ENCODE measurements at regions of chr2 and their contacts with region 1.

Region 1: DNA sequence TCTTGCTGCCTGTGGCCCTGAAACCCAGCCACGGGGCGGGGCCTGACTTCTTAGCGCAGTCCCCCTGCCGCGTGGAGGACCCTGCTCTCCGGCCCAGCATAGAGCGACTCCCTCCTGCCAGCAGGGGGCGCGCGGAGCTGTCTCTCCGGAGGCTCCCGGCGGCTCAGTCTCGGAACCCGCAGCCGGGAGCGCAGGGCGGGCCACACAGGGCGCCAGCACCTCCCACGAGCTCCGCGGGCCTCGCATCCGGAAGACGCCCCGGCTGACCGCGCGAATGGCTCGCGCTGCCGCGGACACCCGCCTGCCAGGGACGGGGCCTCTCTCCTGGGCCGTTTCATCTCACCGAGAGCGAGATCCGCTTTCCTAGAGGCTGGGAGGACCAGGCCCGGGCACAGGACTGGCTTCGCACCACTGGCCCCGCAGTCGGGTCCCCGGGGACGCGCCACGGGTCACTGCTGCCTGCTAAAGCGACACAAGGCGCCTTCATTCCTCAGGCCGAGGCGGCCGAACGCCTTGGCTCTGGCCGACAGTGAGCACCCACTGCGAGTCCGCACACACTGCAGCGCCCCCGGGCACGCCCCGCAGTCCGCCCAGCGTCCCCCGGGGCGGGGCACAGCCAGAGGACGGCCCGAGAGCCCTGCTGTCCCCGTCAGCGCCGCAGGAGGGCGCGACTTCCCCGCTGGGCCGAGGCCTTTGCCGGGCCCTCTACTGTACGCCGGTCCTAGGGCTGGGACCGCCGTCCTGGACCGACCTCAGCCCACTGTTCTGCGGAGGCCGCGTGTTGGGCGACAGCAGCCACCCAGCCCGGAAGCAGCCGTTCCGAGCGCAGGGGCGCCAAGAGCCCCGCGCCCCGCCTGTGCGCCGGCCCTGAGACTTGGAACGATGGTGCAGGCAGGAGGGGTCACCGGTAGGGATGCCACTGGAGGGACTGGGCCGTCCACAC is 39.0 kb upstream of the ARHGEF4 start:
- DNase-seq: peak; percentile 94
- ATAC-seq: peak; percentile 96
- H3K4me3 Mint-ChIP-seq: peak overlapping the region; percentile 63
- H3K27ac Mint-ChIP-seq: peak overlapping the region; percentile 42
- H3K4me1 Mint-ChIP-seq: peaks cover 3% of the 10 kb centered on the region
- H3K27me3 Mint-ChIP-seq: peaks cover 3% of the 10 kb centered on the region
- CTCF ChIP-seq: peak; percentile 78

Region 2: DNA sequence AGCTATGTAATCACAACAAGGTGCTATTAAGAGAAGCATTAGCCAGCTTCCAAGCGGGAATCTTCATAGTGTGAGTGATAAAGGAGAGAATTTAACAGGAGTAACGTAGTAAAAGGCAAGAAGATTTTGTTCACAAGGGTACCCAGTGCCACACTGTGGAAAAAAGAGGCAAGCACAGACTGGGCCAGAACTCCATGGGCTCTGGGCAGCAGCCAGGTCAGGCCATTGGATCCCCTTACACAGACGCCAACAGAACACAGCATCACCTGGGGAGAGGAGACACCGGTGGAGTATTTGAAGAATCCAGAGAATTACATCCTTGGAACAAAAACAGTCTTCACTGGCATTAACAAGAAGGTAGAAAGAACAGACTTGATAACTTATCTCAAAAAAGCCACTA is 21.2 kb before region 1 on chr2:
- CTCF ChIA-PET with region 1: no interaction called
- POLR2A ChIA-PET with region 1: no interaction called
- intact Hi-C with region 1: no loop called
- DNase-seq: no peak
- ATAC-seq: no peak
- H3K4me3 Mint-ChIP-seq: no peak overlapping the region
- H3K27ac Mint-ChIP-seq: no peak overlapping the region
- H3K4me1 Mint-ChIP-seq: no peaks in the 10 kb centered on the region
- H3K27me3 Mint-ChIP-seq: peaks cover 12% of the 10 kb centered on the region
- CTCF ChIP-seq: no peak

Region 3: GRCh38 chr2:130824492-130825061 is 26.8 kb after region 1 on chr2:
- CTCF ChIA-PET with region 1: interaction called, 31 read pairs
- POLR2A ChIA-PET with region 1: interaction called, 3 read pairs
- intact Hi-C with region 1: no loop called
- DNase-seq: peak; percentile 88
- ATAC-seq: peak; percentile 91
- H3K4me3 Mint-ChIP-seq: peak overlapping the region; percentile 29
- H3K27ac Mint-ChIP-seq: peak overlapping the region; percentile 93
- H3K4me1 Mint-ChIP-seq: peaks cover 25% of the 10 kb centered on the region
- H3K27me3 Mint-ChIP-seq: peaks cover 2% of the 10 kb centered on the region
- CTCF ChIP-seq: no peak

Region 4: GRCh38 chr2:130864830-130865800 is 67.4 kb after region 1 on chr2:
- CTCF ChIA-PET with region 1: interaction called, 241 read pairs
- POLR2A ChIA-PET with region 1: no interaction called
- intact Hi-C with region 1: no loop called
- DNase-seq: no peak
- ATAC-seq: peak; percentile 56
- H3K4me3 Mint-ChIP-seq: no peak overlapping the region
- H3K27ac Mint-ChIP-seq: no peak overlapping the region
- H3K4me1 Mint-ChIP-seq: no peaks in the 10 kb centered on the region
- H3K27me3 Mint-ChIP-seq: peaks cover 4% of the 10 kb centered on the region
- CTCF ChIP-seq: no peak

Region 5: DNA sequence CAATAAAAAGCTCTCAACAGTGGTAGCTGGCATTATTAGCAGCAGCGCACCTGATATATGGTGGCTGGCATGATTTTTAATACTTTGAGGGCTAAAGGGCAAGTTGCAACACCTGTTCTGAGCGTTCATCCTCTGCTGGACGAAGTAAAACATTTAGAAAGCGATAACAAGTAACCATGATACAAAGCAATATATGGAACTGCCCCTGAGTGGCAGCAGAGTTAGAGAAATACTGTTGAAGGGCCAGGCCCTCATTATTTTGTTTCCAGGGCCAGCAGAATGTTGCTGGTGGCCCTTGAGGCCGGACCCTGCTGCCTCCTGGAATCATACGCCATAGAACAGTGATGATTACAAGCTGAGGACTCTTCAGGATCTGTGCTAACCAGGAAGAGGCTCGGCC is 86.7 kb after region 1 on chr2:
- CTCF ChIA-PET with region 1: interaction called, 12 read pairs
- POLR2A ChIA-PET with region 1: no interaction called
- intact Hi-C with region 1: no loop called
- DNase-seq: no peak
- ATAC-seq: no peak
- H3K4me3 Mint-ChIP-seq: no peak overlapping the region
- H3K27ac Mint-ChIP-seq: no peak overlapping the region
- H3K4me1 Mint-ChIP-seq: no peaks in the 10 kb centered on the region
- H3K27me3 Mint-ChIP-seq: peaks cover 4% of the 10 kb centered on the region
- CTCF ChIP-seq: no peak